Naive thymus-derived CD4-positive, alpha-beta T cell (primary cell): ENCODE measurements at regions of chr1 and their contacts with region 1.

Region 1: GRCh38 chr1:59046730-59047157 is 250.2 kb upstream of the FGGY start:
- DNase-seq: peak in 7 of 9 donors; percentile 18 to 49 (median 34)
- ATAC-seq: peak; percentile 84
- H3K4me3 ChIP-seq: no peak overlapping the region
- H3K4me3 Mint-ChIP-seq: peak overlapping the region in 8 of 10 donors; percentile 14 to 82 (median 34)
- H3K27ac ChIP-seq: no peak overlapping the region
- H3K27ac Mint-ChIP-seq: peak overlapping the region; percentile 64 to 96 (median 77)
- H3K4me1 ChIP-seq: peaks cover 30% of the 10 kb centered on the region in 2 donors
- H3K4me1 Mint-ChIP-seq: peaks cover 26 to 65% (median 41%) of the 10 kb centered on the region in 7 donors
- H3K27me3 ChIP-seq: no peaks in the 10 kb centered on the region
- H3K27me3 Mint-ChIP-seq: no peaks in the 10 kb centered on the region

Region 2: GRCh38 chr1:58816072-58816746 is 230.5 kb before region 1 on chr1:
- CTCF ChIA-PET with region 1: no interaction called
- POLR2A ChIA-PET with region 1: no interaction called
- intact Hi-C with region 1: loop called in 1 of 2 experiments (anchors 10 kb)
- DNase-seq: peak; percentile 66 to 84 (median 71)
- ATAC-seq: peak; percentile 88
- H3K4me3 ChIP-seq: peak overlapping the region; percentile 89
- H3K4me3 Mint-ChIP-seq: peak overlapping the region; percentile 88 to 94 (median 92)
- H3K27ac ChIP-seq: peak overlapping the region; percentile 77
- H3K27ac Mint-ChIP-seq: peak overlapping the region; percentile 77 to 95 (median 90)
- H3K4me1 ChIP-seq: peaks cover 27 to 34% of the 10 kb centered on the region in 2 donors
- H3K4me1 Mint-ChIP-seq: peaks cover 19 to 49% (median 41%) of the 10 kb centered on the region in 7 donors
- H3K27me3 ChIP-seq: no peaks in the 10 kb centered on the region
- H3K27me3 Mint-ChIP-seq: peaks cover 0 to 5% (median 0%) of the 10 kb centered on the region in 5 donors

Region 3: GRCh38 chr1:58932859-58933598 is 113.7 kb before region 1 on chr1:
- CTCF ChIA-PET with region 1: no interaction called
- POLR2A ChIA-PET with region 1: no interaction called
- intact Hi-C with region 1: loop called in 1 of 2 experiments (anchors 5 kb)
- DNase-seq: no peak
- ATAC-seq: peak; percentile 69
- H3K4me3 ChIP-seq: no peak overlapping the region
- H3K4me3 Mint-ChIP-seq: peak overlapping the region in 1 of 10 donors; percentile 21
- H3K27ac ChIP-seq: no peak overlapping the region
- H3K27ac Mint-ChIP-seq: peak overlapping the region in 3 of 9 donors; percentile 4 to 45 (median 25)
- H3K4me1 ChIP-seq: peaks cover 0 to 9% of the 10 kb centered on the region in 2 donors
- H3K4me1 Mint-ChIP-seq: peaks cover 8 to 64% (median 39%) of the 10 kb centered on the region in 7 donors
- H3K27me3 ChIP-seq: no peaks in the 10 kb centered on the region
- H3K27me3 Mint-ChIP-seq: peaks cover 0 to 6% (median 0%) of the 10 kb centered on the region in 5 donors

Region 4: GRCh38 chr1:58968360-58968952 is 78.3 kb before region 1 on chr1:
- CTCF ChIA-PET with region 1: no interaction called
- POLR2A ChIA-PET with region 1: no interaction called
- intact Hi-C with region 1: loop called in 1 of 2 experiments (anchors 2 kb)
- DNase-seq: peak in 6 of 9 donors; percentile 34 to 66 (median 56)
- ATAC-seq: peak; percentile 66
- H3K4me3 ChIP-seq: no peak overlapping the region
- H3K4me3 Mint-ChIP-seq: peak overlapping the region; percentile 55 to 84 (median 70)
- H3K27ac ChIP-seq: peak overlapping the region; percentile 72
- H3K27ac Mint-ChIP-seq: peak overlapping the region; percentile 91 to 100 (median 96)
- H3K4me1 ChIP-seq: peaks cover 16 to 28% of the 10 kb centered on the region in 2 donors
- H3K4me1 Mint-ChIP-seq: peaks cover 13 to 73% (median 41%) of the 10 kb centered on the region in 7 donors
- H3K27me3 ChIP-seq: no peaks in the 10 kb centered on the region
- H3K27me3 Mint-ChIP-seq: no peaks in the 10 kb centered on the region

Region 5: DNA sequence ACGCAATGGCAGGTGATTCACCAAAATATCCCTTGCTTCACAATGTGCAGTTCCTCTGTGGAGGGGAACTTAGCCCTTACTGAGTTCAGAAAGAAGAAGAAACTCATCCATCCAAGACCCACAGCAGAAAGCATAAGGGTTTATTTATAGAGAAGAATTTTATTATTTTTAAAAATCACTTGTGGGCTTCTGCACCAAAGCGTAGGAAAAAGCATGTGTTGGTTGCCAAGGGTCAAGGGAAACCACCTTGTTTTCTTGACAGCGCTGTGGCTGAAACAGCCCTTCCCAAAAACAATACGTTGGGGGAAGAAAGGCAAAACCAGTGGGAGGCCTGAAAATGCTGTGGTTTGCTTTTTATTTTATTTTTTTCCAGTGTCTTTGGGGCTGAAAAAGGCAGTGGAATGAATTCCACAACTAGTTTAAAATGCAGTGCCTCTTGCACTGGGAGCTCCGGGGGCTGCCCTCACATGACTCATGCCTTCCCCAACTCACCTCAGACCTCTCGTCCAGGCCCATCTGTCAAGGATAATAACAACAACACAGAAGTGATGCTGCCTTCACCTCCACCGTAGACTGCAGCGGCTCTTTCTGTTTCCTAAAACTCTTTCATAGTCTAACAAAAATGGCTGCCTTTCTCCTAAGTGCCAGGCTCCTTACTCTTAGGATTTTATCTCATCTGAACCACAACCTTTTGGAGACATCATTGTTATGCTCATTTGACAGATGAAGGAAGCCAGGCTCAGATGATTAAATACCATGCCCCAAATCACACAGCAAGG is 38.7 kb before region 1 on chr1:
- CTCF ChIA-PET with region 1: no interaction called
- POLR2A ChIA-PET with region 1: no interaction called
- intact Hi-C with region 1: loop called in 1 of 2 experiments (anchors 5 kb)
- DNase-seq: peak in 1 of 9 donors; percentile 60
- ATAC-seq: no peak
- H3K4me3 ChIP-seq: no peak overlapping the region
- H3K4me3 Mint-ChIP-seq: peak overlapping the region in 1 of 10 donors; percentile 58
- H3K27ac ChIP-seq: no peak overlapping the region
- H3K27ac Mint-ChIP-seq: peak overlapping the region in 2 of 9 donors; percentile 61 to 80
- H3K4me1 ChIP-seq: peaks cover 6 to 26% of the 10 kb centered on the region in 2 donors
- H3K4me1 Mint-ChIP-seq: peaks cover 23 to 63% (median 25%) of the 10 kb centered on the region in 7 donors
- H3K27me3 ChIP-seq: no peaks in the 10 kb centered on the region
- H3K27me3 Mint-ChIP-seq: peaks cover 0 to 4% (median 0%) of the 10 kb centered on the region in 5 donors

Region 6: DNA sequence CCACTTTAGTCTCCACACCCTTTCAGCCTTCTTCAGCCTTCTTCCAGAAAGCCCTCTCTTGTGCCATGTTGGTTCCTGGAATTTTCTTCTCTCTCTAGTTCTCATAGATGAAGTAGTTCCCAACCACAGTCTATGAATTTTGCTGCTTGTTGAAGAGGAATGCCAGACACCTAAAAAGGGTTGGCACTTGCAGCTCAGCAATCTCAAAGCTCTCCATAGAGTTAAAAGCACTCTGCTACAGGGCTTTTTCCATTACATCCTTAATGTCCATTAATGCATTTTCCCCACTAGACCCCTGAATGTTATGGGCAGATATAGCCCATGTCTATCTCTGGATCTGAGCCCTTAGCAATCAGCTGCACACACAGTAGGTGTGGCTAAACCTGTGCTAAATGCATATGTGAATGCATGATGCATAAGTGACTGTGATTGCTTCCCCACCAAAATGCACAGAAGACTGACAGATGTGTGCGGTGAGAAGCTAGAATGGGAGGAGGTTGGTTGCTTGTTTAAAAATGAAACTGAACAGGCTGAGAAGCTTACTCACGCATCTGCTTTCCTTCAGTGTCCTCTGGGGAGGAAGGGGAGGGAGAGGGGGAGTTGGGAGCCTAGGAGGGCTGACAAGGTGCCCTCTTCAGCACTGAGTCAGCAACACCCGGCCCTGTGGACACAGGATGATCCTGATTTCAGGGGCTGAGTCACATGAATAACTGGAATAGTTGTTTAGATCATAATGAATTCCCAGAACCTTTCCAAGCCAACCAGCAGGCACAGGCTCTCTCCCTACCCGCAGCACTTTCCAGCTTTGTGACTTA is 104.0 kb after region 1 on chr1:
- CTCF ChIA-PET with region 1: no interaction called
- POLR2A ChIA-PET with region 1: no interaction called
- intact Hi-C with region 1: loop called in 1 of 2 experiments (anchors 5 kb)
- DNase-seq: peak in 1 of 9 donors; percentile 32
- ATAC-seq: no peak
- H3K4me3 ChIP-seq: no peak overlapping the region
- H3K4me3 Mint-ChIP-seq: peak overlapping the region in 2 of 10 donors; percentile 5 to 66
- H3K27ac ChIP-seq: no peak overlapping the region
- H3K27ac Mint-ChIP-seq: peak overlapping the region in 1 of 9 donors; percentile 44
- H3K4me1 ChIP-seq: peaks cover 0 to 5% of the 10 kb centered on the region in 2 donors
- H3K4me1 Mint-ChIP-seq: peaks cover 0 to 45% (median 13%) of the 10 kb centered on the region in 7 donors
- H3K27me3 ChIP-seq: no peaks in the 10 kb centered on the region
- H3K27me3 Mint-ChIP-seq: peaks cover 0 to 9% (median 5%) of the 10 kb centered on the region in 5 donors